PC-3 (cell line): ENCODE measurements at regions of chrX and their contacts with region 1.

Region 1: DNA sequence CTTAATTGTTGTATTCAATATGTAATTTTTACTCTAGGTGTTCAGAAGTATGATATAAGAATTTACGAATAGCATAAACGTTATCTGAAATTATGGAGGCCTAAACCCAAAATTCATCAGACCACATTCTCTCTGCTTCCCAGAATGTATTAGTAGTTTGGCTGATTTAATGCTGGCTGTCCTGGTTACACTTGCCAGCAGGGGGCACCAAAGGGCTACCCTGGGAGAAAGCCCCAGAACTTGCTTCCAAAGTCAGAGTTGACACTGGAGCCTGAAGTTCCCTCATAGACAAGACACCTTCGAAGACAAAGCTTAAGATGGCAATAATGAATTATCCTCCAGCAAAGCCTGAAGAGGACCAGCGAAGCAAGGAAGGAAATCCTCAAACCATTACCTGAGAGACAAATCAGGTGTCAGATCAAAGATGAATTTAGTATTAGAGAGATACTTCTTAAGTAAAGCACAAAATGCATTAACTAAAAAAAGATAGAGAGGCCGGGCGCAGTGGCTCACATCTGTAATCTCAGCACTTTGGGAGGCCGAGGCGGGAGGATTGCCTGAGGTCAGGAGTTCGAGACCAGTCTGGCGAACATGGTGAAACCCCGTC is 11.3 kb upstream of the ANOS1 start:
- DNase-seq: peak; percentile 69
- ATAC-seq: peak; percentile 70
- H3K4me3 ChIP-seq: no peak overlapping the region
- H3K27ac ChIP-seq: no peak overlapping the region
- H3K4me1 ChIP-seq: no peaks in the 10 kb centered on the region
- H3K27me3 ChIP-seq: no peaks in the 10 kb centered on the region
- CTCF ChIP-seq: peak; percentile 83

Region 2: GRCh38 chrX:7996414-7996813 is 746.8 kb before region 1 on chrX:
- CTCF ChIA-PET with region 1: no interaction called
- POLR2A ChIA-PET with region 1: no interaction called
- intact Hi-C with region 1: loop called (anchors 1 kb)
- DNase-seq: peak; percentile 65
- ATAC-seq: peak; percentile 60
- H3K4me3 ChIP-seq: no peak overlapping the region
- H3K27ac ChIP-seq: no peak overlapping the region
- H3K4me1 ChIP-seq: 0 out of 2 replicates have a peak, but pooled peaks cover 5% of the 10 kb centered on the region
- H3K27me3 ChIP-seq: no peaks in the 10 kb centered on the region
- CTCF ChIP-seq: peak; percentile 71

Region 3: DNA sequence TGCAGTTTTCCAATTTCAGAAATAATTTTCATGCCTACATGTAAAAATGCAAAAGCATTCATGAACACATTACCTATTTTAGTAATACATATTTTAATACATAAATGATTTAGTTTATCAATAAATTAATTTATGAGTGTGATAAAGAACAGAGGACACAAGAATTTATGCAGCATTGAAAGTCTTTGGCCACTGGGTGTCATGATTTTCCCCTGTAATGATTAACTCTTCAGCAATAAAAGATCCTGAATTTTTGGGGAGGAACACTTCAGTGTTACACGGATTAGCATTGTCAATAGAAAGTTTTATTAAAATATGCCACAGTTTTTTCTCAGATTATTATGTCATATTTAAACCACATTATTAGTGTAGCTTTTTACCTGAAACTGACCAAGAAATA is 563.6 kb before region 1 on chrX:
- CTCF ChIA-PET with region 1: no interaction called
- POLR2A ChIA-PET with region 1: no interaction called
- intact Hi-C with region 1: loop called (anchors 5 kb)
- DNase-seq: peak; percentile 49
- ATAC-seq: no peak
- H3K4me3 ChIP-seq: no peak overlapping the region
- H3K27ac ChIP-seq: no peak overlapping the region
- H3K4me1 ChIP-seq: no peaks in the 10 kb centered on the region
- H3K27me3 ChIP-seq: no peaks in the 10 kb centered on the region
- CTCF ChIP-seq: peak; percentile 43; the same call in 1 of the 2 replicates

Region 4: GRCh38 chrX:8364369-8365141 is 378.7 kb before region 1 on chrX:
- CTCF ChIA-PET with region 1: no interaction called
- POLR2A ChIA-PET with region 1: no interaction called
- intact Hi-C with region 1: loop called (anchors 1 kb)
- DNase-seq: peak; percentile 63
- ATAC-seq: peak; percentile 54; the same call in 1 of the 2 replicates
- H3K4me3 ChIP-seq: no peak overlapping the region
- H3K27ac ChIP-seq: no peak overlapping the region
- H3K4me1 ChIP-seq: no peaks in the 10 kb centered on the region
- H3K27me3 ChIP-seq: no peaks in the 10 kb centered on the region
- CTCF ChIP-seq: peak; percentile 83

Region 5: DNA sequence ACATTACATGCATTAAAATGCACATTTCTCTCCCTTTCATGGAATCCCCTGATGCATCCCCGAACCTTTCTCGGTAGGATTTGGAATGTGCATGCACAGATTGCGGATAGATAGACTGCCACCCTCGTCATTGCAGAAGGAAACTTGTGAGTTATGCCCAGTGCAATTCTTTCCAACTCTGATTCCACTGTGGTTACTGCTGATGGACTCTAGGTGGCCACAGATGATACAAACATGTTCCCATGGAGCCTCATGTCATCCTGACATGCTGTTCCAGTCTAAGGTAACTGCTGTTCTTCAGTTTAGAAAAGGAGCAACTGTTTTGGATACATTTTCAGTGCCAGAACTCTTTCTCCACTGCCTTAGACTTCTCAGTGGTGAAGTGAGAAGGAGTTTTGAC is 287.7 kb before region 1 on chrX:
- CTCF ChIA-PET with region 1: no interaction called
- POLR2A ChIA-PET with region 1: no interaction called
- intact Hi-C with region 1: loop called (anchors 5 kb)
- DNase-seq: peak; percentile 52
- ATAC-seq: peak; percentile 67
- H3K4me3 ChIP-seq: no peak overlapping the region
- H3K27ac ChIP-seq: no peak overlapping the region
- H3K4me1 ChIP-seq: no peaks in the 10 kb centered on the region
- H3K27me3 ChIP-seq: no peaks in the 10 kb centered on the region
- CTCF ChIP-seq: peak; percentile 59

Region 6: DNA sequence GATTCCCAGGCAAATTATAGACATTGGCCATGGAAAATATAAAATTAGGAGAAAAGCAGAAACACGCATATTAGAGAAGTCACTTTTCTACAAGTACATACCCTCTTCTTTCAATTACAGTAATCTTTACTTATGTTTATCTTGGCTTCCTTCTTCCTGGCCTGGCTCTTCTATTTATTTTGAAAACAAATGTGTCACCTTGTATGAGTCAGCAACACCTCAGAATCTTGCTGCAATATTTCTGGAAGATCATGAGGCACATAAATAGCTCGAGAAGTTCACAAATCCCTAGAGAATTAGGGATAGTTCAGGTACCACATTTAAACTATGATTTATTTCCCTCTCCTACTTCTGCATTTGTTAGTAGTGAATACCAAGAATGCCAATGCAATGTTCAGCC is 135.9 kb before region 1 on chrX:
- CTCF ChIA-PET with region 1: no interaction called
- POLR2A ChIA-PET with region 1: no interaction called
- intact Hi-C with region 1: no loop called
- DNase-seq: peak; percentile 61
- ATAC-seq: peak; percentile 49
- H3K4me3 ChIP-seq: no peak overlapping the region
- H3K27ac ChIP-seq: no peak overlapping the region
- H3K4me1 ChIP-seq: peaks cover 8% of the 10 kb centered on the region
- H3K27me3 ChIP-seq: no peaks in the 10 kb centered on the region
- CTCF ChIP-seq: no peak

Region 7: GRCh38 chrX:8815464-8816065 is 72.3 kb after region 1 on chrX:
- CTCF ChIA-PET with region 1: no interaction called
- POLR2A ChIA-PET with region 1: no interaction called
- intact Hi-C with region 1: loop called (anchors 1 kb)
- DNase-seq: peak; percentile 82
- ATAC-seq: peak; percentile 64
- H3K4me3 ChIP-seq: no peak overlapping the region
- H3K27ac ChIP-seq: no peak overlapping the region
- H3K4me1 ChIP-seq: no peaks in the 10 kb centered on the region
- H3K27me3 ChIP-seq: no peaks in the 10 kb centered on the region
- CTCF ChIP-seq: peak; percentile 80

Region 8: GRCh38 chrX:9708904-9709553 is 965.8 kb after region 1 on chrX:
- CTCF ChIA-PET with region 1: interaction called, 3 read pairs
- POLR2A ChIA-PET with region 1: no interaction called
- intact Hi-C with region 1: loop called (anchors 10 kb)
- DNase-seq: peak; percentile 76
- ATAC-seq: peak; percentile 76
- H3K4me3 ChIP-seq: no peak overlapping the region
- H3K27ac ChIP-seq: 0 out of 2 replicates have a peak overlapping the region, but pooled peaks have one; percentile 20
- H3K4me1 ChIP-seq: peaks cover 11% of the 10 kb centered on the region
- H3K27me3 ChIP-seq: no peaks in the 10 kb centered on the region
- CTCF ChIP-seq: peak; percentile 85